ENCODE measurements at regions of chr5 and their contacts with region 1.

Region 1: GRCh38 chr5:17477573-17478265 is 20.3 kb upstream of the TAF11L2 start:
- DNase-seq: no peak
- ATAC-seq: no peak
- H3K4me3 ChIP-seq: no peak overlapping the region
- H3K27ac ChIP-seq: no peak overlapping the region
- H3K4me1 ChIP-seq: no peaks in the 10 kb centered on the region
- H3K27me3 ChIP-seq: no peaks in the 10 kb centered on the region
- CTCF ChIP-seq: no peak
- EP300 ChIP-seq: no peak
- POLR2A ChIP-seq: no peak
- RAD21 ChIP-seq: no peak

Region 2: GRCh38 chr5:17405976-17406872 is 71.5 kb before region 1 on chr5:
- CTCF ChIA-PET with region 1: no interaction called
- POLR2A ChIA-PET with region 1: no interaction called
- in situ Hi-C with region 1: no loop called
- intact Hi-C with region 1: no loop called
- DNase-seq: no peak
- ATAC-seq: no peak
- H3K4me3 ChIP-seq: no peak overlapping the region
- H3K27ac ChIP-seq: no peak overlapping the region
- H3K4me1 ChIP-seq: peaks cover 0 to 3% of the 10 kb centered on the region in 2 experiments; a peak in 2 of 5 replicates
- H3K27me3 ChIP-seq: no peaks in the 10 kb centered on the region
- CTCF ChIP-seq: no peak
- EP300 ChIP-seq: no peak
- POLR2A ChIP-seq: no peak
- RAD21 ChIP-seq: no peak

Region 3: GRCh38 chr5:18305297-18305924 is 827.7 kb after region 1 on chr5:
- CTCF ChIA-PET with region 1: no interaction called
- POLR2A ChIA-PET with region 1: no interaction called
- in situ Hi-C with region 1: loop called (anchors 25 kb)
- intact Hi-C with region 1: no loop called
- DNase-seq: peak; percentile 11 to 15 (median 13)
- ATAC-seq: no peak
- H3K4me3 ChIP-seq: no peak overlapping the region
- H3K27ac ChIP-seq: no peak overlapping the region
- H3K4me1 ChIP-seq: no peaks in the 10 kb centered on the region
- H3K27me3 ChIP-seq: no peaks in the 10 kb centered on the region
- CTCF ChIP-seq: peak; percentile 32 to 53 (median 50); a peak in 4 of 6 replicates
- EP300 ChIP-seq: no peak
- POLR2A ChIP-seq: no peak
- RAD21 ChIP-seq: peak; percentile 65 to 78